Activated CD4-positive, alpha-beta T cell treated with anti-CD3 and anti-CD28 coated beads for 36 hours (primary cell): ENCODE measurements at regions of chr20 and their contacts with region 1.

Region 1: GRCh38 chr20:3312940-3313682 is 74.1 kb upstream of the SLC4A11 start:
- DNase-seq: no peak
- ATAC-seq: no peak
- H3K4me3 Mint-ChIP-seq: no peak overlapping the region
- H3K27ac Mint-ChIP-seq: no peak overlapping the region
- H3K4me1 Mint-ChIP-seq: no peaks in the 10 kb centered on the region
- H3K27me3 Mint-ChIP-seq: no peaks in the 10 kb centered on the region

Region 2: GRCh38 chr20:3115190-3116107 is 197.7 kb before region 1 on chr20:
- CTCF ChIA-PET with region 1: no interaction called
- POLR2A ChIA-PET with region 1: no interaction called
- intact Hi-C with region 1: loop called in 1 of 2 experiments (anchors 1 kb)
- DNase-seq: peak; percentile 32
- ATAC-seq: peak; percentile 52
- H3K4me3 Mint-ChIP-seq: no peak overlapping the region
- H3K27ac Mint-ChIP-seq: no peak overlapping the region
- H3K4me1 Mint-ChIP-seq: peaks cover 13% of the 10 kb centered on the region
- H3K27me3 Mint-ChIP-seq: no peaks in the 10 kb centered on the region

Region 3: GRCh38 chr20:3218307-3218988 is 94.7 kb before region 1 on chr20:
- CTCF ChIA-PET with region 1: interaction called, 76 read pairs
- POLR2A ChIA-PET with region 1: no interaction called
- intact Hi-C with region 1: loop called (anchors 1 to 2 kb)
- DNase-seq: peak; percentile 86
- ATAC-seq: peak; percentile 86
- H3K4me3 Mint-ChIP-seq: no peak overlapping the region
- H3K27ac Mint-ChIP-seq: no peak overlapping the region
- H3K4me1 Mint-ChIP-seq: peaks cover 14% of the 10 kb centered on the region
- H3K27me3 Mint-ChIP-seq: no peaks in the 10 kb centered on the region

Region 4: GRCh38 chr20:3276680-3277015 is 36.5 kb before region 1 on chr20:
- CTCF ChIA-PET with region 1: interaction called, 3 read pairs
- POLR2A ChIA-PET with region 1: no interaction called
- intact Hi-C with region 1: loop called in 1 of 2 experiments (anchors 5 kb)
- DNase-seq: no peak
- ATAC-seq: no peak
- H3K4me3 Mint-ChIP-seq: no peak overlapping the region
- H3K27ac Mint-ChIP-seq: no peak overlapping the region
- H3K4me1 Mint-ChIP-seq: no peaks in the 10 kb centered on the region
- H3K27me3 Mint-ChIP-seq: no peaks in the 10 kb centered on the region

Region 5: DNA sequence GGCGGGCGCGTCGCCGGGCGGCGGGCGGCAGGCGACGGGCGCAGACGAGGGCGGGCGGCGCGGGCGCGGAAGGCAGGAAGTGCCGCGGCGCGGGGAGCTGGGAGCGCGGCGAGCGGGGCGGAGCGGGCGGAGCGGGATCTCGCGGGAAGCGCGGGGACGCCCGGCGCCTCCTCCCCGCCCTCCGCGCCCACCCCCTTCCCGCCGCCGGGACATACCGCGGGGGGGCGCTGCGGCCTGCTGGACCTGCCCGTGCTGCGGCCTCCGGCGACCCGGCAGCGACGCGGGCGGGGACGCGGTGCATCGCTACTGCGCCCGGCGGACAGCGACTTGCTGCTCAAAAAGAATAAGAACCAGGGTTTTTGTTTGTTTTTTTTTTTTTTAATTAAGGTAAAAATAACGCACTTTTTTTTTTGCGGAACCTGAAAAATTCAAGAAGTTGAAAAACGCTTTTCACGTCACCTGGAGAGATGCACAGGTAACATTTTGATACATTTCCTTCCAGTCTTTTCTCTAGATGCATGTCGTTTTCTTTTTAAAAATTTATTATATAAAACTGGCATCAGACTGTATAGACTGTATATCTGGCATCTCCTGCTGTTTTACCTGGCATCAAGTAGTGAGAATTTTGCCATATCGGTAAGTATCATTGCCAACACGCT is 473.7 kb after region 1 on chr20 and contains the start of gene CENPB:
- CTCF ChIA-PET with region 1: no interaction called
- POLR2A ChIA-PET with region 1: no interaction called
- intact Hi-C with region 1: no loop called
- DNase-seq: peak; percentile 95
- ATAC-seq: peak; percentile 89
- H3K4me3 Mint-ChIP-seq: peak within 1 kb of the TSS; percentile 77
- H3K27ac Mint-ChIP-seq: peak within 1 kb of the TSS; percentile 84
- H3K4me1 Mint-ChIP-seq: peaks cover 39% of the 10 kb centered on the region
- H3K27me3 Mint-ChIP-seq: no peaks in the 10 kb centered on the region
- total RNA-seq, gene CENPB: 46.2 to 48.3 TPM